Pancreas (tissue), 10 donors: ENCODE measurements at regions of chr1 and their contacts with region 1.

Region 1: GRCh38 chr1:14733048-14733778 is 134.7 kb downstream of the KAZN start:
- DNase-seq: peak in 1 of 6 donors; percentile 14
- ATAC-seq: peak in 3 of 4 donors; percentile 46 to 63 (median 63)
- H3K4me3 ChIP-seq: no peak overlapping the region
- H3K27ac ChIP-seq: peak overlapping the region; percentile 13 to 62 (median 36)
- H3K4me1 ChIP-seq: no peaks in the 10 kb centered on the region
- H3K27me3 ChIP-seq: no peaks in the 10 kb centered on the region
- CTCF ChIP-seq: no peak

Region 2: GRCh38 chr1:14094611-14095400 is 638.4 kb before region 1 on chr1:
- intact Hi-C with region 1: loop called in 1 of 3 experiments (anchors 10 kb)
- DNase-seq: peak in 1 of 6 donors; percentile 21
- ATAC-seq: peak; percentile 77 to 92 (median 83)
- H3K4me3 ChIP-seq: no peak overlapping the region
- H3K27ac ChIP-seq: no peak overlapping the region
- H3K4me1 ChIP-seq: peaks cover 0 to 7% (median 0%) of the 10 kb centered on the region in 3 donors
- H3K27me3 ChIP-seq: no peaks in the 10 kb centered on the region
- CTCF ChIP-seq: peak; percentile 35 to 61 (median 40)